Activated CD8-positive, alpha-beta T cell treated with anti-CD3 and anti-CD28 coated beads for 36 hours (primary cell): ENCODE measurements at regions of chr6 and their contacts with region 1.

Region 1: DNA sequence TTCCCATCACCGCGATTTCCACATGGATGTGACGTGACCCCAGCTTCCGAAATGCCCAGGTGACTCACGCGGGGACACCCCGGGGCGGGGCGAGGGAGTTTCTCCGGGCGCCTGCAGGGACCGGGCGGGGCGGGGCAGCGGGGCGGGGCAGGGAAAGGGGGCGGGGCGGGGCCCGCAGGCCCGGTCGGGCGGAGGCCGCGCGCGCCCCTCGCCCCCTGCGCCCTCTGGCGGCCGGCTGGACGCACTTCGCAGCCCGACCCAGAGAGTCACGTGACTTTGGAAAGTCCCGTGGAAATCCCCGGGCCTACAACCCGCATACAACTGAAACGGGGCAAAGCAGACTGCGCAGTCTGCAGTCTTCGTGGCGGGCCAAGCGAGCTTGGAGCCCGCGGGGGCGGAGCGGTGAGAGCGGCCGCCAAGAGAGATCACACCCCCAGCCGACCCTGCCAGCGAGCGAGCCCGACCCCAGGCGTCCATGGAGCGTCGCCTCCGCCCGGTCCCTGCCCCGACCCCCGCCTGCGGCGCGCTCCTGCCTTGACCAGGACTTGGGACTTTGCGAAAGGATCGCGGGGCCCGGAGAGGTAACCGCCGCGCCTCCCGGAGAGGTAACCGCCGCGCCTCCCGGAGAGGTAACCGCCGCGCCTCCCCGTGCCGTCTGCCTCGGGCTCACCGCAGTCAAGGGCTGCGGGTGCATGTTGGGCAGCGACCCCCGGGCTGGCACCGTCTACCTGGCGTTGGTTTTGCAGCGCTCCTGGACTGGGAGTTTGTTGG is at the start of gene TNFAIP3:
- DNase-seq: peak; percentile 97
- ATAC-seq: peak; percentile 70
- H3K4me3 Mint-ChIP-seq: peak within 1 kb of the TSS; percentile 98
- H3K27ac Mint-ChIP-seq: peak within 1 kb of the TSS; percentile 99
- H3K4me1 Mint-ChIP-seq: peaks cover 39% of the 10 kb centered on the region
- H3K27me3 Mint-ChIP-seq: no peaks in the 10 kb centered on the region
- CTCF ChIP-seq: peak; percentile 60
- total RNA-seq, gene TNFAIP3: 399 to 402 TPM

Region 2: GRCh38 chr6:137647762-137648447 is 219.2 kb before region 1 on chr6:
- CTCF ChIA-PET with region 1: no interaction called
- POLR2A ChIA-PET with region 1: no interaction called
- intact Hi-C with region 1: no loop called
- DNase-seq: no peak
- ATAC-seq: peak; percentile 74
- H3K4me3 Mint-ChIP-seq: no peak overlapping the region
- H3K27ac Mint-ChIP-seq: no peak overlapping the region
- H3K4me1 Mint-ChIP-seq: no peaks in the 10 kb centered on the region
- H3K27me3 Mint-ChIP-seq: peaks cover 14% of the 10 kb centered on the region
- CTCF ChIP-seq: no peak

Region 3: GRCh38 chr6:137697267-137697938 is 169.7 kb before region 1 on chr6:
- CTCF ChIA-PET with region 1: interaction called, 58 read pairs
- POLR2A ChIA-PET with region 1: interaction called, 10 read pairs
- intact Hi-C with region 1: no loop called
- DNase-seq: no peak
- ATAC-seq: peak; percentile 29
- H3K4me3 Mint-ChIP-seq: no peak overlapping the region
- H3K27ac Mint-ChIP-seq: peak overlapping the region; percentile 55
- H3K4me1 Mint-ChIP-seq: peaks cover 43% of the 10 kb centered on the region
- H3K27me3 Mint-ChIP-seq: peaks cover 8% of the 10 kb centered on the region
- CTCF ChIP-seq: no peak

Region 4: GRCh38 chr6:137791281-137792159 is 75.6 kb before region 1 on chr6:
- CTCF ChIA-PET with region 1: interaction called, 221 read pairs
- POLR2A ChIA-PET with region 1: interaction called, 9 read pairs
- intact Hi-C with region 1: no loop called
- DNase-seq: no peak
- ATAC-seq: peak; percentile 13
- H3K4me3 Mint-ChIP-seq: peak overlapping the region; percentile 47
- H3K27ac Mint-ChIP-seq: peak overlapping the region; percentile 56
- H3K4me1 Mint-ChIP-seq: peaks cover 54% of the 10 kb centered on the region
- H3K27me3 Mint-ChIP-seq: no peaks in the 10 kb centered on the region
- CTCF ChIP-seq: no peak

Region 5: GRCh38 chr6:137811121-137811915 is 55.8 kb before region 1 on chr6:
- CTCF ChIA-PET with region 1: interaction called, 66 read pairs
- POLR2A ChIA-PET with region 1: interaction called, 13 read pairs
- intact Hi-C with region 1: no loop called
- DNase-seq: peak; percentile 93
- ATAC-seq: peak; percentile 89
- H3K4me3 Mint-ChIP-seq: peak overlapping the region; percentile 60
- H3K27ac Mint-ChIP-seq: peak overlapping the region; percentile 86
- H3K4me1 Mint-ChIP-seq: peaks cover 70% of the 10 kb centered on the region
- H3K27me3 Mint-ChIP-seq: no peaks in the 10 kb centered on the region
- CTCF ChIP-seq: no peak

Region 6: GRCh38 chr6:137878486-137879285 is 11.6 kb after region 1 on chr6:
- CTCF ChIA-PET with region 1: interaction called, 28 read pairs
- POLR2A ChIA-PET with region 1: interaction called, 35 read pairs
- intact Hi-C with region 1: no loop called
- DNase-seq: no peak
- ATAC-seq: no peak
- H3K4me3 Mint-ChIP-seq: peak overlapping the region; percentile 98
- H3K27ac Mint-ChIP-seq: peak overlapping the region; percentile 95
- H3K4me1 Mint-ChIP-seq: peaks cover 90% of the 10 kb centered on the region
- H3K27me3 Mint-ChIP-seq: no peaks in the 10 kb centered on the region
- CTCF ChIP-seq: no peak

Region 7: DNA sequence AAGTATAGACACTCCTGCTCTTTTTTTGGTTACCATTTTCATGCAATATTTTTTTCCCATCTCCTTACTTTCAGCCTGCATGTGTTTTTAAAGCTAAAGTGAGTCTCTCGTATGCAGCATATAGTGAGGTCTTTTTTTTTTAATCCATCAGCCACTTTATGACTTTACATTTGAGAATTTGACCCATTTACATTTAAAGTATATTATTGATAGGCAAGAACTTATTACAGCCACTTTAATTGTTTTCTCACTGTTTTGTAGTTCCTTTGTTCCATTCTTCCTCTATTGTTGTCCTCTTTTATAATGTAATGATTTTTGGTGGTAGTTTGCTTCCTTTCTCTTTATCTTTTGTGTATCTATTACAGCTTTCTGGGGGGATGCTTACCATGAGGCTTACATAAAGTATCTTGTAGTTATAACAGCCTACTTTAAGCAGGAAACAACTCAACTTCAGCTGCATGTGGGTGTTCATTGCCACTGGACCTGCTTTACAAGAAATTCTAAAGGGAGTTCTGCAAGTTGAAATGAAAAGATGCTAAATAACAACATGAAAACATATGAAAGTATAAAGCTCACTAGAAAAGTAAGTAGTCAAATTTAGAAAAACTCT is 71.8 kb after region 1 on chr6:
- CTCF ChIA-PET with region 1: interaction called, 360 read pairs
- POLR2A ChIA-PET with region 1: interaction called, 17 read pairs
- intact Hi-C with region 1: loop called (anchors 2 kb)
- DNase-seq: no peak
- ATAC-seq: no peak
- H3K4me3 Mint-ChIP-seq: peak overlapping the region; percentile 39
- H3K27ac Mint-ChIP-seq: peak overlapping the region; percentile 92
- H3K4me1 Mint-ChIP-seq: peaks cover 44% of the 10 kb centered on the region
- H3K27me3 Mint-ChIP-seq: no peaks in the 10 kb centered on the region
- CTCF ChIP-seq: no peak

Region 8: GRCh38 chr6:137975188-137975940 is 108.3 kb after region 1 on chr6:
- CTCF ChIA-PET with region 1: interaction called, 80 read pairs
- POLR2A ChIA-PET with region 1: interaction called, 8 read pairs
- intact Hi-C with region 1: loop called (anchors 2 kb)
- DNase-seq: peak; percentile 64
- ATAC-seq: peak; percentile 69
- H3K4me3 Mint-ChIP-seq: peak overlapping the region; percentile 70
- H3K27ac Mint-ChIP-seq: peak overlapping the region; percentile 94
- H3K4me1 Mint-ChIP-seq: peaks cover 70% of the 10 kb centered on the region
- H3K27me3 Mint-ChIP-seq: no peaks in the 10 kb centered on the region
- CTCF ChIP-seq: peak; percentile 82

Region 9: DNA sequence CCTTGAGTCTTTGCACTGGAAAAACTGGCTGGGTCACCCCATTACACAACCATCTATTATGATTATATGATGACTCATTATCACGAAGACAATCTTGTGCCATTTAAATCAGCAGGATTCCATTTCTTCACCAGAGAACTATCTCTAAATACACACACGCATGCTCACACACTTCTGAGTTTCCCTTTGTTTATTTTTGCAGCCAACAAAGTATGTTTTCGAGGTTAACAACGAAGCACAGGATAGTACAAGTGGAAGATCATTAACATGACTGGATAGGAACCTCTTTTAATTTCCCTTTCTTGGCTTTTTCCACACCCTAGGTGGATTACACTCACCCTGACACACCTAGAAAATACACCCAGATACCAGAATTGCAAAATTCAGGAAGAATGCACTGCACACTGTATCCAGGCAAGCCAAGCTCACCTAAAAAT is 221.2 kb after region 1 on chr6:
- CTCF ChIA-PET with region 1: no interaction called
- POLR2A ChIA-PET with region 1: no interaction called
- intact Hi-C with region 1: no loop called
- DNase-seq: no peak
- ATAC-seq: no peak
- H3K4me3 Mint-ChIP-seq: no peak overlapping the region
- H3K27ac Mint-ChIP-seq: no peak overlapping the region
- H3K4me1 Mint-ChIP-seq: no peaks in the 10 kb centered on the region
- H3K27me3 Mint-ChIP-seq: peaks cover 14% of the 10 kb centered on the region
- CTCF ChIP-seq: no peak

Region 10: GRCh38 chr6:138124096-138124495 is 257.0 kb after region 1 on chr6:
- CTCF ChIA-PET with region 1: no interaction called
- POLR2A ChIA-PET with region 1: no interaction called
- intact Hi-C with region 1: no loop called
- DNase-seq: no peak
- ATAC-seq: no peak
- H3K4me3 Mint-ChIP-seq: no peak overlapping the region
- H3K27ac Mint-ChIP-seq: no peak overlapping the region
- H3K4me1 Mint-ChIP-seq: no peaks in the 10 kb centered on the region
- H3K27me3 Mint-ChIP-seq: peaks cover 9% of the 10 kb centered on the region
- CTCF ChIP-seq: no peak